Endothelial cell of umbilical vein (primary cell): ENCODE measurements at regions of chr3 and their contacts with region 1.

Region 1: DNA sequence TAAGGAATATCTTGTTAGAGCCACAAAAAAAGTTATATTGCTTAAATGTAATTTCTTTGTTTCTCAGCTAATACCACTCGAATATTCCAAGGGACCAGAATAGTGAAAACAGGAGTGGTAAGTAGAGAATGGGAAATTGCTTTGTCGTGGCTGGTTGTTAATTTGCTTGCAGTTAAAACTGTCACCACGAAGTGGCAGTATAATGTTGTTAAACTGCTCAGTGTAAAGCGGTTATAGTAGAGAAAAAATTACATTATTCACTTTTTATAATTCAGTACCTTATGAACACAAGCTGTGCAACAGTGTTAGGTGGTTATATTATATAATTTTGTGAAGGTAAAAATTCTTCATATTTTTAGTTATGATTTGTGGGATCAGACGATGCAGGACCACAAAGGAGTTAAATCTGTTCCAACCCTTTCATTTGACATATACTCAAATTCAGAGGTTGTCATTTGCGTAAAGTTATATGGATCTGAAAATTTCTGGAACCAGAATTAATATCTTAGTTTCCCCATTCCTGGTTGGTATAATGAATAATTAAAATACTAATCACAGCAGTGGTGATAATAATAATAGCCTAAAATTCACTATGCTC is 171.8 kb downstream of the FEZF2 start:
- DNase-seq: peak; percentile 59
- H3K4me3 ChIP-seq: no peak overlapping the region
- H3K27ac ChIP-seq: no peak overlapping the region
- H3K4me1 ChIP-seq: no peaks in the 10 kb centered on the region
- H3K27me3 ChIP-seq: no peaks in the 10 kb centered on the region
- CTCF ChIP-seq: peak; percentile 36 to 40
- POLR2A ChIP-seq: no peak

Region 2: DNA sequence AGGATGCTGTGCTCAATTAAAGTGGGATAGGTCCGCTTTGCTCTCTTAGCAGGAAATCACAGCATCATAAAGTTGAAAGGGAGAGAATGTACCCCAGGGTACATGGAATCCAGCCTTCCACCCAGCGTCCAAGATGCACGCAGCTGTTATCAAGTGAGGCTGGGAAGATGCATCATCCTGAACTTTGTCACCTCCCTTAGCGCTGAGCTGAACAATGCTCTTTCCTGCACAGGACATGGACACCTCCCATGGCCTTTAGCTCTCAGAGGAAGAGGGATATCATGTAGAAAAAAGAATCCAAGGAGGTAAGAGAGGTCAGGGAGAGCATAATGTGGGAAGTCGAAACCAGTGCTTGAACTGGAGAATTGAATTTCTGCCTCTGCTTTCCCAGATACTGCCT is 21.0 kb before region 1 on chr3:
- CTCF ChIA-PET with region 1: no interaction called
- POLR2A ChIA-PET with region 1: no interaction called
- dilution Hi-C with region 1: no loop called
- intact Hi-C with region 1: no loop called
- DNase-seq: no peak
- H3K4me3 ChIP-seq: no peak overlapping the region
- H3K27ac ChIP-seq: no peak overlapping the region
- H3K4me1 ChIP-seq: no peaks in the 10 kb centered on the region
- H3K27me3 ChIP-seq: no peaks in the 10 kb centered on the region
- CTCF ChIP-seq: no peak
- POLR2A ChIP-seq: no peak

Region 3: GRCh38 chr3:62318750-62319569 is 117.4 kb after region 1 on chr3:
- CTCF ChIA-PET with region 1: no interaction called
- POLR2A ChIA-PET with region 1: no interaction called
- dilution Hi-C with region 1: no loop called
- intact Hi-C with region 1: loop called (anchors 2 kb)
- DNase-seq: peak; percentile 81
- H3K4me3 ChIP-seq: peak overlapping the region; percentile 71 to 85 (median 81)
- H3K27ac ChIP-seq: peak overlapping the region; percentile 39
- H3K4me1 ChIP-seq: peaks cover 9% of the 10 kb centered on the region
- H3K27me3 ChIP-seq: no peaks in the 10 kb centered on the region
- CTCF ChIP-seq: no peak
- POLR2A ChIP-seq: no peak

Region 4: GRCh38 chr3:63228087-63229023 is 1026.8 kb after region 1 on chr3:
- CTCF ChIA-PET with region 1: interaction called, 3 read pairs
- POLR2A ChIA-PET with region 1: no interaction called
- dilution Hi-C with region 1: no loop called
- intact Hi-C with region 1: loop called (anchors 5 kb)
- DNase-seq: peak; percentile 13
- H3K4me3 ChIP-seq: no peak overlapping the region
- H3K27ac ChIP-seq: no peak overlapping the region
- H3K4me1 ChIP-seq: no peaks in the 10 kb centered on the region
- H3K27me3 ChIP-seq: no peaks in the 10 kb centered on the region
- CTCF ChIP-seq: peak; percentile 16 to 21
- POLR2A ChIP-seq: no peak